ENCODE measurements at regions of chrX and their contacts with region 1.

Region 1: GRCh38 chrX:118807151-118808017 is 16.2 kb upstream of the ZCCHC12 start:
- DNase-seq: no peak

Region 2: GRCh38 chrX:118437283-118437682 is 370.1 kb before region 1 on chrX:
- intact Hi-C with region 1: no loop called
- DNase-seq: no peak

Region 3: GRCh38 chrX:118644378-118644777 is 163.0 kb before region 1 on chrX:
- intact Hi-C with region 1: loop called in 1 of 2 experiments (anchors 10 kb)
- DNase-seq: no peak